Left ventricle myocardium inferior (tissue), 1 donor: ENCODE measurements at regions of chr12 and their contacts with region 1.

Region 1: GRCh38 chr12:98653866-98654493 is 8.9 kb downstream of the APAF1 start:
- DNase-seq: no peak
- H3K4me3 ChIP-seq: no peak overlapping the region
- H3K27ac ChIP-seq: no peak overlapping the region
- H3K4me1 ChIP-seq: no peaks in the 10 kb centered on the region
- H3K27me3 ChIP-seq: no peaks in the 10 kb centered on the region
- CTCF ChIP-seq: peak; percentile 70

Region 2: DNA sequence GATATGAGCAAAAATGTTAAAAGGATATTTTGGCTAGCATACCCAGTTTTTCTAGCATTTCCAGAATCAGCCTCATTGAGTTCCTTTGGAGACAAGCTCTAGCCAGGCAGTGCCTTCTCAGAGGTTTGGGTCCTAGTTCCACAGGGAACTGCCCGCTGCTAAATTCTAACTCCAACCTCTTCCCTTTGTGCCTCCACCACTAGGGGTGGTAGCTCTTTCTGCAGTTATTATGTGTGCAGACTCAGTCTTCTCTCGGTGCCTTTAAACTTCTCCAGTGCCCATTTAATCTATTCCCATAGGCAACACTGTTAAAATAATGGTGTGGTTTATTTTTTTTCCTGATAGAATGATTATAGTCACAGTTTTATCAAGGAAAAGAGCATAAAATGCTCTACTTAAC is 82.0 kb before region 1 on chr12:
- intact Hi-C with region 1: loop called (anchors 5 kb)
- DNase-seq: no peak
- H3K4me3 ChIP-seq: no peak overlapping the region
- H3K27ac ChIP-seq: peak overlapping the region; percentile 30
- H3K4me1 ChIP-seq: peaks cover 7% of the 10 kb centered on the region
- H3K27me3 ChIP-seq: no peaks in the 10 kb centered on the region
- CTCF ChIP-seq: peak; percentile 44